ENCODE measurements at regions of chr2 and their contacts with region 1.

Region 1: GRCh38 chr2:218357236-218358159 is 841 bp downstream of the CATIP start:
- DNase-seq: peak in 1 of 2 experiments; percentile 40
- ATAC-seq: peak; percentile 27 to 49; a peak in 5 of 6 replicates
- H3K4me3 ChIP-seq: no peak overlapping the region
- H3K27ac ChIP-seq: peak overlapping the region; percentile 59 to 76; a peak in 5 of 6 replicates
- H3K4me1 ChIP-seq: peaks cover 10% of the 10 kb centered on the region
- CTCF ChIP-seq: no peak
- EP300 ChIP-seq: no peak
- POLR2A ChIP-seq: no peak
- RAD21 ChIP-seq: no peak

Region 2: GRCh38 chr2:217713395-217714286 is 643.9 kb before region 1 on chr2:
- CTCF ChIA-PET with region 1: no interaction called
- POLR2A ChIA-PET with region 1: no interaction called
- DNase-seq: peak; percentile 61 to 65
- ATAC-seq: peak; percentile 75 to 92
- H3K4me3 ChIP-seq: no peak overlapping the region
- H3K27ac ChIP-seq: peak overlapping the region; percentile 37 to 73; a peak in 5 of 6 replicates
- H3K4me1 ChIP-seq: peaks cover 6% of the 10 kb centered on the region; the same call in 2 of the 3 replicates
- CTCF ChIP-seq: peak; percentile 92
- EP300 ChIP-seq: no peak
- POLR2A ChIP-seq: no peak
- RAD21 ChIP-seq: peak; percentile 98 to 99

Region 3: DNA sequence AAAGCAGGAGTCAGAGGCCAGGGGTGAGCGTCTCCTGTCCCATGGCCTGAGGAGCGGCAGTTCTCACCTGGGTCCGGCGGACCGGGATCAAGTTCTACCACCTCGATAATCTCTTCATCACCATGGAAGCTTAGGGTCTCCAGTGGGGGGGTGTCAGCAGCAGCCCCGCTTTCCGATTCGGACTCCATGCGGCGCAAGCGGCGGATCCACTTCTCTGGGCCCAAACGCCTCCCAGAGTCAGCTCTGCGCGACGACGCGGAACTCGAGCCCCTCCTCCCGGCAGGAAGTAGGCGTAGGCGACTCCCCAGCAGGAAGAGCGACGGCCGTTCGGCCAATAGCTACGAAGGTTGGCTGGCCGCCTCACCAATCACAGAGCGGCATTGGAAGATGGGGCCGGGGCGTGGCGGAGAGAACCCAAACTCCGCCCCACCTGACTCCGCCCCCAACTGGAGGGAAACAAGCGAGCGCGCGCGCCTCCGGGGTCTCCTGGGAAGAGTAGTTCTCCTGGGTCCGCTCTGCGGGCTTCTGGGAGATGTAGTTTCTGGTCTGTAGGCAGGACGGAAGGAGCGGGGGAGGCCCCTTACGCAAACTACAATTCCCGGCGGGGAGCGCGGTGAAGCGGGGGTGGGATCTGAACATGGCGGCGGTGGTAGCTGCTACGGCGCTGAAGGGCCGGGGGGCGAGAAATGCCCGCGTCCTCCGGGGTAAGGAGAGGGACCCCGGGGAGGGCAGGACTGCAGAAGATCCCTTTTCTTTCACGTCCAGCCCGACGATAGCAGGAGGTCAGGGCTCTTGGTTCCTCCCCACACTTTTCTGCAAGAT is 87.4 kb before region 1 on chr2 and contains the starts of genes AAMP and PNKD:
- CTCF ChIA-PET with region 1: interaction called, 32 read pairs
- POLR2A ChIA-PET with region 1: interaction called, 4 read pairs
- DNase-seq: peak; percentile 97 to 99
- ATAC-seq: peak; percentile 88 to 93
- H3K4me3 ChIP-seq: peak within 1 kb of the TSS; percentile 97
- H3K27ac ChIP-seq: peak within 1 kb of the TSS; percentile 90 to 92
- H3K4me1 ChIP-seq: peaks cover 25% of the 10 kb centered on the region
- CTCF ChIP-seq: no peak
- EP300 ChIP-seq: no peak
- POLR2A ChIP-seq: peak; percentile 75
- RAD21 ChIP-seq: no peak
- polyA plus RNA-seq, gene AAMP: 71.3 and 82.0 TPM in 2 replicates
- polyA plus RNA-seq, gene PNKD: 46.2 and 52.6 TPM in 2 replicates

Region 4: DNA sequence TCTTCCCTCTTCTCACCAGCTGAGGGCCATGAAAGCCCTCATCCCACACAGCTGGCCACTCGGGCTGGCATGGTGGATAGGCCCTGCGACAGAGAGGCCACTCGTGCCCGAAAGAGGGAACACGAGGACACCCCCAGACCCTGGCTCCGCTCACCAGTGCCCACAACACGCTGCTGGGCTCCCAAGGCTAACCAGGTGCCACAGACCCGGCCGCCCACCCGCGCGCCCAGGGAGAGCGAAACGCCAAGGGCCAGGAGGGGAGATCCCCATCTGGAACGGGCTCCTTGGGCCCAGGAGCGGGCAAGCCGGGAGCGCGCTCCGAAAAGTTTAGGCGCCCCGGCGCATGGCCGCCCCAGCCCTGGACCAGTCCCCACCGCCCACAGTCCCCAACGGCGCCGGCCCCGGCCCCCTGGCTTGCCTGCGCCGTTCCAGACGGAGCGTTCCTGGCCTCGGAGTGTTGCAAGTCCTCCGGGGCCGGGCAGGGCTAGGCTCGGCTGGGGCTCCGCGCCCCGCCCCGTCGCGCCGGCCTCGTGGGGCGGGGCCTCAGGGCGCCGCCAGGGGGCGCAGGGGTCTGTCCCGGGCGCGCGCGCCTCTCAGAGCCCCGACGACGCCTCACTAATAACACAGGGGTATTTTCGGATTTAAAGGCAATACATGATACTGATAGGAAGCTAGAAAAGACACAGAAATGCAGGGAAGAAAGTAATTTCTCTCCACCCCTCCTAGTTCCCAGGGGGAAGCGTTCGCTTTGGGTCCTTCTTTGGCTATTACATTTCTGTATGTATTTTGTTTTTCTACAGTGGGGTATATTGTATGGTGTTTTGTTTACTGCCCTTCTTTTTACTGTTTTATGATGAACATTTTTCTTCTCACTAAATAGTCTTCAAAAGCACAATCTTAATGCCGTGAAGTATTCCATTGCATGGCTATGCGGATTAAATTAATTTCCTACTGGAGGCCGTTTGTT is 65.2 kb before region 1 on chr2 and contains the start of gene TMBIM1:
- CTCF ChIA-PET with region 1: interaction called, 19 read pairs
- POLR2A ChIA-PET with region 1: no interaction called
- DNase-seq: peak; percentile 69 to 84
- ATAC-seq: peak; percentile 93 to 95
- H3K4me3 ChIP-seq: peak within 1 kb of the TSS; percentile 91
- H3K27ac ChIP-seq: peak within 1 kb of the TSS; percentile 92 to 97
- H3K4me1 ChIP-seq: peaks cover 38% of the 10 kb centered on the region
- CTCF ChIP-seq: peak; percentile 95
- EP300 ChIP-seq: no peak
- POLR2A ChIP-seq: peak; percentile 56
- RAD21 ChIP-seq: peak; percentile 9 to 65; a peak in 4 of 5 replicates
- polyA plus RNA-seq, gene TMBIM1: 61.4 and 91.5 TPM in 2 replicates

Region 5: DNA sequence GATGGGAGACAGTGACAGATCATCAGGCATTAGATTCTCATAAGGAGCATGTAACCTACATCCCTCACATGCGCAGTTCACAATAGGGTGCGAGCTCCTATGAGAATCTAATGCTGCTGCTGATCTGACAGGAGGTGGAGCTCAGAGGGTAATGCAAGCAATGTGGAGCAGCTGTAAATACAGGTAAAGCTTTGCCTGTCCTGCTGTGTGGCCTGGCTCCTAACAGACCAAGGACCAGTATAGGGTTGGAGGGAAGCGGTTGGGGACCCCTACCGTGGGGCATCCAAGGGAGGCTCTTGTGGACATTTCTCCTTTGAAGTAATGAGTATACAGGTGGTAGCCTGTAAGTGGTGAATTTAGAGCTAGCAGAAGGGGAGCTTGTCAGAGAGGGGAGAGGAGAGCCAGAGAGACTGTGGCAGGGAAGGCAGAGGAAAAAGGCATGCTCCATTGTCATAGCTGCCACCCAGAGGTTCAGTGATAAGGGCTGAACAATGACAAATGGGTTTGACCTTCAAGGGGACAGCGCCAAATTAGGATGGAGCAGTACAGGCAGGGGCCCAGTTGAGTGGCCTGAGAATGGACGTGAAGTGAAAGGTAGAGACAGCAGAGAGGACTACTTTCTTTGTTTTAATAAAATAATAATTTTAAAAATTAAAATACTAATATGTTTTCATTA is 49.9 kb before region 1 on chr2:
- CTCF ChIA-PET with region 1: interaction called, 49 read pairs
- POLR2A ChIA-PET with region 1: no interaction called
- DNase-seq: no peak
- ATAC-seq: no peak
- H3K4me3 ChIP-seq: no peak overlapping the region
- H3K27ac ChIP-seq: no peak overlapping the region
- H3K4me1 ChIP-seq: peaks cover 9% of the 10 kb centered on the region; the same call in 2 of the 3 replicates
- CTCF ChIP-seq: no peak
- EP300 ChIP-seq: no peak
- POLR2A ChIP-seq: no peak
- RAD21 ChIP-seq: no peak

Region 6: DNA sequence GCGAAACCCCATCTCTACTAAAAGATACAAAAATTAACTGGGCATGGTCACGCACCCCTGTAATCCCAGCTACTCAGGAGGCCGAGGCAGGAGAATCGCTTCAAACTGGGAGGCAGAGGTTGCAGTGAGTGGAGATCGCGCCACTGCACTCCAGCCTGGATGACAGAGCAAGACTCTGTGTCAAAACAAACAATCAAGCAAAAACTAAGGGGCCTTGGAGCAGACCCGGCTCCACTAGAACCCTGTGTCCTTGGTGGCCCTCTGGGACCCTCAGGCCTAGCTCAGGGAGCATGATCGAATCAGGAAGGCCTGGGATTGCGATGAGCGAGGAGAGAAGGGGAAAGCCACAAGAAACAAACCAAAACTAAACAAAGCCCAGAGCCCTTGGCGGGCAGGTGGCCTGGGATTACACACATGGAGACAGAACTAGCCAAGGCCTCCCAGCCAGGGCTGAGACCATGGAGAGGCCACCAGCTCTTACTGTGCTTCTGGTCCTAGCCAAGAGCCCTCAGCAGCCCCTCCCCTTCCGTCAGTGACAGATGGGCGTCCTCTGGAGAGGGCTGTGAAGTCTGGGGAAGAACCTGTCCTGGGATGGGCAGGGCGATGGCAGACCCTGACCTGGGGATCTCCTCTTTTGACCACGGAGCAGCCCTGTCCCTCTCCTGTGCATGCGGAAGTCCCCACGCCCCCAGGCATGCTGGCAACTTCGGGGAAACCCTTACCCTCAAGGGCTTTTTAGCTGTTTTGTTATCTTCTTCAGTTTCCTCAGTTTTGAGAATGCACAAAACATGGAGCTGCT is 28.3 kb before region 1 on chr2:
- CTCF ChIA-PET with region 1: interaction called, 28 read pairs
- POLR2A ChIA-PET with region 1: no interaction called
- DNase-seq: no peak
- ATAC-seq: no peak
- H3K4me3 ChIP-seq: no peak overlapping the region
- H3K27ac ChIP-seq: no peak overlapping the region
- H3K4me1 ChIP-seq: peaks cover 21% of the 10 kb centered on the region
- CTCF ChIP-seq: no peak
- EP300 ChIP-seq: no peak
- POLR2A ChIP-seq: no peak
- RAD21 ChIP-seq: no peak

Region 7: DNA sequence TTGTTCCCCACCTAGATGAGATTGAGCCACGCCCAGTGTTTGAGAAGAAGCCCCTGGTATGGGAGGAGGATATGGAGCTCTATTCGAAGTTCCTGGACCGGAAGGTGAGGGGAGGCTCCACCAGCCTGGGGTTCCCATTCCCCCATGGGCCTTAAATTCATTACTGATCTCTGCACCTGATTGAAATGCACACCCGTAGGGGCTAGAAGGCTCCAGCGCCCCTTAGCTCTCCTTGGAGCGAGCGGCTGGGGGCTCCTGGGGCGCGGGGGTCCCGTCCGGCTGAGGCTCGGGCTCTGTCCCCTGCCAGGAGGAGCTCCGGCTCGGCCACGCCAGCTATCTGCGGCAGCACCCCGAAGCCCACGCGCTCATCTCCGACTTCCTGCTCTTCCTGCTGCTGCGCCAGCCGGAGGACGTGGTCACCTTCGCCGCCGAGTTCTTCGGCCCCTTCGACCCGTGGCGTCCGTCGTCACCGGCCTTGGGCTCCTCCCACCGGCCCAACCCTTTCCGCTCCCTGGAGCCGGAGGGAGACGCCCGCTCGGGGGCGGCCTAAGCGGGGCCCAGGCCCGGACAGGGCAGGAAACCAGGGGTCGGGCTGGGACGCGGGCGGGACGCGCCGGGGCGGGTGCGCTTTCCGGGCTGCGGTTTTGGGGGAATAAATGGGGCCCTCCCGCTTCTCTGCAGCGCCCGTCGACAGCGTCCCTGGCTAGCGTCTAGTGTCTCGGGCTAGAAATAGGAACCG is 10.1 kb after region 1 on chr2:
- CTCF ChIA-PET with region 1: interaction called, 18 read pairs
- POLR2A ChIA-PET with region 1: no interaction called
- DNase-seq: peak; percentile 78 to 81
- ATAC-seq: peak; percentile 95 to 98
- H3K4me3 ChIP-seq: peak overlapping the region; percentile 58
- H3K27ac ChIP-seq: peak overlapping the region; percentile 86 to 91
- H3K4me1 ChIP-seq: 0 out of 3 replicates have a peak, but pooled peaks cover 3% of the 10 kb centered on the region
- CTCF ChIP-seq: no peak
- EP300 ChIP-seq: no peak
- POLR2A ChIP-seq: peak; percentile 95
- RAD21 ChIP-seq: peak in 1 of 2 experiments; percentile 26; a peak in 1 of 5 replicates

Region 8: GRCh38 chr2:218500501-218501060 is 143.1 kb after region 1 on chr2:
- CTCF ChIA-PET with region 1: no interaction called
- POLR2A ChIA-PET with region 1: no interaction called
- DNase-seq: no peak
- ATAC-seq: no peak
- H3K4me3 ChIP-seq: no peak overlapping the region
- H3K27ac ChIP-seq: no peak overlapping the region
- H3K4me1 ChIP-seq: no peaks in the 10 kb centered on the region
- CTCF ChIP-seq: no peak
- EP300 ChIP-seq: no peak
- POLR2A ChIP-seq: no peak
- RAD21 ChIP-seq: no peak

Measured in A549 (cell line).